Gastrocnemius medialis (tissue), 4 donors: ENCODE measurements at regions of chr6 and their contacts with region 1.

Region 1: DNA sequence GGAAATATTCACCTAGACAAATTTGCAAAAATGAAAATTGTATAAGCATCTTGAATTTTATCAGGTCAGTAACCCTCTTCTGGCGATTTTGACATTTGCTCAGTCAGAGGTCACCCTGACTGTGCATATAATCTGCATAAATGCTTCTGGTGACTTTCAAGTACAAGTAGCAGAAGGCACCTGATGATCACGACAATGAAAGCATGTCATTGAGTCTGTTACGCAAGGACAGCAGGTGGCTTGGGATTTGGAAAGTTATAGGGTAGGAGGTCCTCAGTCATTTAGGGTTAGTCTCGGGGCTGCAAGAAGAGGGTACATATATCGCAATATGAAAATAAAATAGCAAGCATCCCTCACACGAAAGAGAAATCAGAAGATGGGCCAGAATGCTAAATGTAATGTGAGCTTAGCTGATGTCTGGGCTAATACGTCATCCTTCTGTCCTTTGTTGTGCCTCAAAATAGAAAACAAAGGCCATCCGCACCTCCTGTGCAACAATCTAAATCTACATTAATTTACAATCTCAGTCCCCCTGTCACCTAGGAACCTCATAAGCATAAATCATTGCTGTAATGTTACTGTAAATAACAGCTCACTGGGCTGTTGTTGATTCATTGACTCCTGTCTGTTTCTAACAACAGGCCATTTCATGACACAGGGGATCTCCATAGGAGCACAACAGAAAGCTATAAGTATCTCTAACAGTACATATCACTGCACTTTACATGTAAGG is 155.2 kb upstream of the RSPO3 start:
- DNase-seq: peak; percentile 25 to 54
- ATAC-seq: peak; percentile 89 to 92
- H3K4me3 ChIP-seq: peak overlapping the region in 3 of 4 donors; percentile 18 to 25 (median 21)
- H3K27ac ChIP-seq: peak overlapping the region; percentile 60 to 74 (median 72)
- H3K4me1 ChIP-seq: no peaks in the 10 kb centered on the region
- H3K27me3 ChIP-seq: no peaks in the 10 kb centered on the region
- CTCF ChIP-seq: no peak
- POLR2A ChIP-seq: no peak

Region 2: GRCh38 chr6:127111526-127111925 is 148.3 kb after region 1 on chr6:
- in situ Hi-C with region 1: no loop called
- intact Hi-C with region 1: loop called (anchors 5 kb)
- DNase-seq: no peak
- ATAC-seq: no peak
- H3K4me3 ChIP-seq: no peak overlapping the region
- H3K27ac ChIP-seq: peak overlapping the region; percentile 10 to 46 (median 44)
- H3K4me1 ChIP-seq: peaks cover 0 to 25% of the 10 kb centered on the region in 2 donors
- H3K27me3 ChIP-seq: no peaks in the 10 kb centered on the region
- CTCF ChIP-seq: no peak
- POLR2A ChIP-seq: no peak

Region 3: DNA sequence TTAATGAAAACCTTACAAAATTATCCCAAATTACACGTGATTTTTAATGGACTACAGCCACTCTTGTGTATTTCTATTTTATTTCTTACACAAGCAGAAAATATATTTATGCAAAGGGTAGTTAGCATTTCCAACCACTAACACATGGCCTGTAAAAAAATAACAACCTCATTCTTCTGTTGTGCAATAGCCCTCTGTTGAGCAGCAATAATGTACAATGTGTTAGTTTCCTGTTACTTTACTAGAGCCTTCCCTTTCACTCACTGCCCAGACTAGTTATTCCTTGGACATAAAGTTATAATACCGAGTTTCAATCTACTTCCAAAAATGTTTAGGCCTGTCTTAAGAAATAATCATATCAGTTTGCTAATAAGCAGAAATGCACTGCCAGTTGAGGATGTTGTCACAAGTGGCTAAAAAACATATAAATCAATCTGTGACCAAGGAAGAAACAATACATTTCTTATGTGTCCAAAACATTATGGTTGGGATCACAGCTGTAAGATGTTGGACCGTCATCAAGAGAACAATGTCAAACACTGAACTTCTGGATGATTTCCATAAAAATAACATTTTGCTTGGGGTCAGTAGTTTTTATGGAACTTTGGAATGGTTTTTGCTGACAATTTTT is 229.8 kb after region 1 on chr6:
- in situ Hi-C with region 1: no loop called
- intact Hi-C with region 1: loop called (anchors 2 kb)
- DNase-seq: no peak
- ATAC-seq: peak; percentile 68
- H3K4me3 ChIP-seq: no peak overlapping the region
- H3K27ac ChIP-seq: peak overlapping the region; percentile 72 to 78 (median 74)
- H3K4me1 ChIP-seq: peaks cover 42 to 44% of the 10 kb centered on the region in 2 donors
- H3K27me3 ChIP-seq: no peaks in the 10 kb centered on the region
- CTCF ChIP-seq: no peak
- POLR2A ChIP-seq: no peak